IMR-90 (cell line): ENCODE measurements at regions of chr6 and their contacts with region 1.

Region 1: GRCh38 chr6:170438402-170438753 is 114.7 kb downstream of the PSMB1 start:
- DNase-seq: peak; percentile 99
- ATAC-seq: peak; percentile 95
- H3K4me3 ChIP-seq: no peak overlapping the region
- H3K27ac ChIP-seq: peak overlapping the region; percentile 58
- H3K4me1 ChIP-seq: peaks cover 25% of the 10 kb centered on the region
- H3K27me3 ChIP-seq: no peaks in the 10 kb centered on the region
- CTCF ChIP-seq: no peak
- POLR2A ChIP-seq: peak; percentile 57; the same call in 1 of the 2 replicates
- RAD21 ChIP-seq: peak; percentile 33; the same call in 1 of the 2 replicates

Region 2: GRCh38 chr6:170405311-170405975 is 32.9 kb before region 1 on chr6:
- CTCF ChIA-PET with region 1: no interaction called
- POLR2A ChIA-PET with region 1: interaction called, 3 read pairs
- dilution Hi-C with region 1: no loop called
- in situ Hi-C with region 1: no loop called
- intact Hi-C with region 1: loop called (anchors 1 kb)
- DNase-seq: peak; percentile 97
- ATAC-seq: peak; percentile 83
- H3K4me3 ChIP-seq: no peak overlapping the region
- H3K27ac ChIP-seq: peak overlapping the region; percentile 93
- H3K4me1 ChIP-seq: peaks cover 26% of the 10 kb centered on the region
- H3K27me3 ChIP-seq: no peaks in the 10 kb centered on the region
- CTCF ChIP-seq: no peak
- POLR2A ChIP-seq: no peak
- RAD21 ChIP-seq: no peak